PC-3 (cell line): ENCODE measurements at regions of chr7 and their contacts with region 1.

Region 1: DNA sequence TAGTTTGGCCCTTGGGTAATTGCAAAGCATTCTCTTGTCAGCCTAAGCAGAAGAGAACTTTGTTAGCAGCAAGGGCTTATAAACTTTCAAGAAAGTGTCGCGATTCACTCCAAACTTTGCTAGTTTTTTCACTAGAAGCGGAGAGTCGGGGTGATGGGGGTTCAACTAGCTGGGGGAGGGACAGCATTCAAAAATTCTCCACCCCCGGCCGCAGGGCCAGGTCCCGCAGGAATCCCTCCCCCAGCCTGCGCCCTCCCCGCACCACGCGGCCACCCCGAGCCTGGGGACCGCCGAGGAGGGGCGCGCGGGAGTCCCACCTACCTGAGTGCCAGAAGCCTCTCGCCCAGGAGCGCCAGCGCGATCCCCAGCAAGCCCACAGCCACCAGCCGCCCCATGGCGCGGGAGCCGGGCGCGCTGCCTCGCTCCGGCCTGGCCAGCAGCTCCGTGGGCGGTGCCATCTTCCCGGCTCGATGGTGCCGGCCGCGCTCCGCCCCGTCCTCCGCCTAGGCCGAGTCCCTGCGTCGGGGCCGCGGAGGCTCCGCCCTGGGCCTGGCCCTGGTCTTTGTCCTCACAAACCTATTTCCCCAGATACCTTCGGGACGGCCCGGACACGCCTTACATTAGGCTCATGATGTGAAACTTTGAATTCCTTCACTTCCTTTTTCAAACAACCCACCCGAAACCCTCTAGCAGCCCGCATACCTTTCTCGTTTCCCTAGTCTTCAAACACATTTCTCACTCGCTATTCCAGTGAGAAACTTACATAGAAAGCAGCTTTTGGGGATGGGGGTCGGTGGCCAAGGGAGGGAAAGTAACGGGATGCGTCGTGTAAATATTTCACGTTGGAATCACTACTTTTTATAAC is at the start of gene PON2:
- DNase-seq: peak; percentile 85
- ATAC-seq: peak; percentile 99
- H3K4me3 ChIP-seq: peak within 1 kb of the TSS; percentile 90
- H3K27ac ChIP-seq: peak within 1 kb of the TSS; percentile 79
- H3K4me1 ChIP-seq: peaks cover 23% of the 10 kb centered on the region
- H3K27me3 ChIP-seq: no peaks in the 10 kb centered on the region
- CTCF ChIP-seq: no peak
- total RNA-seq, gene PON2: 51.6 and 56.4 TPM in 2 replicates

Region 2: GRCh38 chr7:95263785-95264575 is 170.8 kb before region 1 on chr7:
- CTCF ChIA-PET with region 1: no interaction called
- POLR2A ChIA-PET with region 1: no interaction called
- intact Hi-C with region 1: loop called (anchors 2 kb)
- DNase-seq: peak; percentile 79
- ATAC-seq: peak; percentile 74
- H3K4me3 ChIP-seq: peak overlapping the region; percentile 25; the same call in 1 of the 2 replicates
- H3K27ac ChIP-seq: peak overlapping the region; percentile 85
- H3K4me1 ChIP-seq: peaks cover 39% of the 10 kb centered on the region
- H3K27me3 ChIP-seq: no peaks in the 10 kb centered on the region
- CTCF ChIP-seq: no peak

Region 3: DNA sequence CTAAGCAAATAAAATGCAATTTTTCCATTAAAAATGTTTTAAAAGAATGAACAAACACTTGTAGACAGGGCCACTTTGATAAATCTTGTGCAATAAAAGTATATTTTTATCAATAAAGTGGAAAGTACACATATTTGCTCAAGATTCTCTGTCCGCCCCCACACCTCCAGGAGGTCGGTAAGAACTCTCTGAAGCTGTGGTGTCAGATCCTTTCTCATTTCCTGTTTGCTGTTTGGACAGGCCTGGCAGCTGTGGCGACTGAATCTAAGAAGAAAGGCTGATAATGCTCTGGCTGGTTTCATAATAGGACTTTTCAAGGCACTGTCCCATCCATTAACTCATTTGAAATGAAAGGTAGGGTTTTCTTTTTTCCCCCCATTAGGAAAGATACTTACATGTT is 35.7 kb after region 1 on chr7:
- CTCF ChIA-PET with region 1: no interaction called
- POLR2A ChIA-PET with region 1: no interaction called
- intact Hi-C with region 1: loop called (anchors 2 kb)
- DNase-seq: peak; percentile 22
- ATAC-seq: peak; percentile 90
- H3K4me3 ChIP-seq: no peak overlapping the region
- H3K27ac ChIP-seq: no peak overlapping the region
- H3K4me1 ChIP-seq: peaks cover 8% of the 10 kb centered on the region
- H3K27me3 ChIP-seq: no peaks in the 10 kb centered on the region
- CTCF ChIP-seq: no peak